Heart left ventricle (tissue), 16 donors: ENCODE measurements at regions of chr11 and their contacts with region 1.

Region 1: GRCh38 chr11:35943713-35944655 is at the start of gene LDLRAD3:
- DNase-seq: peak; percentile 76 to 91 (median 82)
- ATAC-seq: peak; percentile 67 to 94 (median 92)
- H3K4me3 ChIP-seq: peak within 1 kb of the TSS; percentile 9 to 77 (median 62)
- H3K27ac ChIP-seq: peak within 1 kb of the TSS in 10 of 12 donors; percentile 25 to 68 (median 60)
- H3K4me1 ChIP-seq: peaks cover 0 to 29% (median 9%) of the 10 kb centered on the region in 12 donors
- H3K27me3 ChIP-seq: peaks cover 0 to 6% (median 0%) of the 10 kb centered on the region in 9 donors
- CTCF ChIP-seq: no peak
- POLR2A ChIP-seq: no peak
- total RNA-seq, gene LDLRAD3: 1.5 to 7.7 (median 2.6) TPM

Region 2: GRCh38 chr11:35746356-35747153 is 197.4 kb before region 1 on chr11:
- intact Hi-C with region 1: no loop called
- DNase-seq: no peak
- ATAC-seq: no peak
- H3K4me3 ChIP-seq: no peak overlapping the region
- H3K27ac ChIP-seq: no peak overlapping the region
- H3K4me1 ChIP-seq: peaks cover 0 to 8% (median 2%) of the 10 kb centered on the region in 12 donors
- H3K27me3 ChIP-seq: no peaks in the 10 kb centered on the region
- CTCF ChIP-seq: no peak
- POLR2A ChIP-seq: no peak

Region 3: DNA sequence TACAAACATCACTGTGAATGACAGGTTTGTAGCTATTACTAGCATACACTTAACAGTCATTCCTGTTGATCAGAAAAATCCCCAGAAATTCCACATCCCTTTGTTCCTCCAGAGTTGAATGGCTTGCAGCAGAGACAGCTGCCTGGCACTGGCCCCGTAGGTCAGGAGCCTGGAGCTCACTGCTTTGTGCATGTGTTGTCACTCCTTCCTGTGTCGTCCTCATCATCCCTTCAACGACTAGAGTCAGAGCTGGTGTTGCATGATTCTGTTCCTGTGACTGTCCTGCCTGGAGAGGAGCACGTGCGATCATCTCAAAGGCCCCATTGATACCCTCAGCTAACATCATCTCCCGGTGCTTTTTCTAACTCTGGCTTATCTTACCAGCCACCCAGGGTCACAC is 58.2 kb after region 1 on chr11:
- intact Hi-C with region 1: no loop called
- DNase-seq: no peak
- ATAC-seq: no peak
- H3K4me3 ChIP-seq: no peak overlapping the region
- H3K27ac ChIP-seq: no peak overlapping the region
- H3K4me1 ChIP-seq: peaks cover 0 to 13% (median 0%) of the 10 kb centered on the region in 12 donors
- H3K27me3 ChIP-seq: no peaks in the 10 kb centered on the region
- CTCF ChIP-seq: no peak
- POLR2A ChIP-seq: no peak

Region 4: DNA sequence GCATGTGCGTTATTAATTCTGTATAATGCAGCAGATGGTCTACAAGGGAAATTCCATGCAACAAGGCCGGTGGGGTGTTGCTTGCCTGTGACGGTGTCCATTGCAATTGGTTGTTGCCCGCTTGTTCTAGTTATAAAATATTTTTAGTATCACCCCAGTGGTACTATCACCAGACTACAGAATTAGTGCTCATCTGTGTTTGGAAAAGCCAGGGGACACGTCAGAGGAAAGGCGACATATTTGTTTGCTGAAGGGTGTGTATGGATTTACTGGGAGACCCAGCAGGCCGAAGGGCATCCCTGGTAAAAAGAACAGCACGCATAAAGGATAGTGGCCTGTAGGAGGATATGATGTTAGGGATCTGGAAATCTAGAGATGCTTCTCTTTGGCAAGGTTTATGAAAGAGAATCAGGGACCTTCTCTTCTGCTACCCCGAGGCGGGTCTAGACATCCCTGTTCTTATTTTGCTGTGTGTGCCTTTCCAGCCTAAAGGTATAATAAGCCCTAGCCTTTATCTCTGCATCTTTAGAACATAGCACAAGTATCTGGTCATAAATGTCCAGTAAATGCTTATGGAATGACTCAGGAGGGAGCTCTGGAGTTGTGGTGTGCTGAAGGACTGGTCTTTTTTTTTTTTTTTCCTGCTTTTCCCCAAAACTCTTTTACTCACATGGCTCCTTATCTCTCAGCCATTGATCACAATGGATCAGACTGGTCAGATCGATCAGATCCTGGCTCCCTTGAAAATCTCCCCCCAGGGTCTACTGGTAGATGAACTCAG is 90.8 kb after region 1 on chr11:
- intact Hi-C with region 1: loop called in 1 of 10 experiments (anchors 10 kb)
- DNase-seq: no peak
- ATAC-seq: no peak
- H3K4me3 ChIP-seq: no peak overlapping the region
- H3K27ac ChIP-seq: no peak overlapping the region
- H3K4me1 ChIP-seq: peaks cover 0 to 25% (median 7%) of the 10 kb centered on the region in 12 donors
- H3K27me3 ChIP-seq: no peaks in the 10 kb centered on the region
- CTCF ChIP-seq: no peak
- POLR2A ChIP-seq: no peak